Right cardiac atrium (tissue), 5 donors: ENCODE measurements at regions of chr13 and their contacts with region 1.

Region 1: GRCh38 chr13:60654415-60654814 is 257.4 kb downstream of the TDRD3 start:
- DNase-seq: peak; percentile 48 to 79 (median 74)
- ATAC-seq: peak; percentile 73 to 83
- H3K4me3 ChIP-seq: no peak overlapping the region
- H3K27ac ChIP-seq: no peak overlapping the region
- H3K4me1 ChIP-seq: no peaks in the 10 kb centered on the region
- H3K27me3 ChIP-seq: no peaks in the 10 kb centered on the region

Region 2: GRCh38 chr13:60696602-60697001 is 42.2 kb after region 1 on chr13:
- intact Hi-C with region 1: no loop called
- DNase-seq: no peak
- ATAC-seq: no peak
- H3K4me3 ChIP-seq: no peak overlapping the region
- H3K27ac ChIP-seq: no peak overlapping the region
- H3K4me1 ChIP-seq: no peaks in the 10 kb centered on the region
- H3K27me3 ChIP-seq: no peaks in the 10 kb centered on the region

Region 3: GRCh38 chr13:61410669-61411297 is 756.4 kb after region 1 on chr13:
- intact Hi-C with region 1: loop called in 1 of 4 experiments (anchors 10 kb)
- DNase-seq: no peak
- ATAC-seq: no peak
- H3K4me3 ChIP-seq: no peak overlapping the region
- H3K27ac ChIP-seq: no peak overlapping the region
- H3K4me1 ChIP-seq: no peaks in the 10 kb centered on the region
- H3K27me3 ChIP-seq: no peaks in the 10 kb centered on the region

Region 4: GRCh38 chr13:61423915-61424314 is 769.5 kb after region 1 on chr13:
- intact Hi-C with region 1: loop called in 2 of 4 experiments (anchors 10 kb)
- DNase-seq: no peak
- ATAC-seq: no peak
- H3K4me3 ChIP-seq: no peak overlapping the region
- H3K27ac ChIP-seq: no peak overlapping the region
- H3K4me1 ChIP-seq: no peaks in the 10 kb centered on the region
- H3K27me3 ChIP-seq: no peaks in the 10 kb centered on the region